Activated CD4-positive, alpha-beta T cell treated with anti-CD3 and anti-CD28 coated beads, Interleukin-2, amount 10 ng/mL, durations not matched to agents 7 days and 5 days (primary cell): ENCODE measurements at regions of chr10 and their contacts with region 1.

Region 1: DNA sequence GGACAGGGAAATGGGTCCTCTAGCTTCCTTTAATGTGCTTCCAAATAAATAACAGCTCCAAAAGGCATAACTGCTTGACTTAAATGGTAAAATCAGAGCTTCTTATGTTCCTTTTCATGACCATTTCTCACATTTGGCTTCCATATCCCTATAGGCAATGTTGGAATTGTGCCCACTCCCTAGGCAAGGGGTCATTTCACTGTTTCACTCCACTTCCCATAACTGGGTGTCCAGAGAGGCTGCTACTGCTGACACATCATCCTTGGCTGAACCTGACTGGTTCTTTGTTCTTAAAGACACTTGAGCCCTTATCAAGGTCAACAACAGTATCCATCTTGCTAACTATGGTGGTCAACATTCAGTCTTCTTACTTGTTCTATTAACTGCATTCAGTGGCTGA is 37.1 kb downstream of the PRTFDC1 start:
- DNase-seq: no peak
- H3K4me3 Mint-ChIP-seq: no peak overlapping the region
- H3K27ac Mint-ChIP-seq: no peak overlapping the region
- H3K4me1 Mint-ChIP-seq: peaks cover 10% of the 10 kb centered on the region
- H3K27me3 Mint-ChIP-seq: no peaks in the 10 kb centered on the region

Region 2: DNA sequence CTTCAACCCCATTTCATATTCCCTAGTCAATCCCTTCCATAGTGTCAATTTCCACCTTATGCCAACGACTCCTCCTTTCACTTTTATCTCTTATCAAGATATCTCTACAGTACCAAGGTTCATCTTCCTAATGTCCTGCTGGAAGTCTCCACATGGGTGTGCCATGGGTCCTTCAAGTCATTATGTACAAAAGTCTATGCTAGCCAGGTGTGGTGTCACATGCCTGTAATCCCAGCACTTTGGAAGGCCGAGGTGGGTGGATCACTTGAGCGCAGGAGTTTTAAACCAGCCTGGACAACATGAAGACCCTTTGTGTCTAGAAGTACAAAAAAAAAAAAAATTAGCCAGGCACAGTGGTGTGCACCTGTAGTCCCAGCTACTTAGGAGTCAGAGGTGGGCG is 10.5 kb before region 1 on chr10:
- CTCF ChIA-PET with region 1: interaction called, 10 read pairs
- POLR2A ChIA-PET with region 1: no interaction called
- DNase-seq: no peak
- H3K4me3 Mint-ChIP-seq: no peak overlapping the region
- H3K27ac Mint-ChIP-seq: no peak overlapping the region
- H3K4me1 Mint-ChIP-seq: peaks cover 13% of the 10 kb centered on the region
- H3K27me3 Mint-ChIP-seq: no peaks in the 10 kb centered on the region